Endothelial cell of umbilical vein (primary cell): ENCODE measurements at regions of chr11 and their contacts with region 1.

Region 1: DNA sequence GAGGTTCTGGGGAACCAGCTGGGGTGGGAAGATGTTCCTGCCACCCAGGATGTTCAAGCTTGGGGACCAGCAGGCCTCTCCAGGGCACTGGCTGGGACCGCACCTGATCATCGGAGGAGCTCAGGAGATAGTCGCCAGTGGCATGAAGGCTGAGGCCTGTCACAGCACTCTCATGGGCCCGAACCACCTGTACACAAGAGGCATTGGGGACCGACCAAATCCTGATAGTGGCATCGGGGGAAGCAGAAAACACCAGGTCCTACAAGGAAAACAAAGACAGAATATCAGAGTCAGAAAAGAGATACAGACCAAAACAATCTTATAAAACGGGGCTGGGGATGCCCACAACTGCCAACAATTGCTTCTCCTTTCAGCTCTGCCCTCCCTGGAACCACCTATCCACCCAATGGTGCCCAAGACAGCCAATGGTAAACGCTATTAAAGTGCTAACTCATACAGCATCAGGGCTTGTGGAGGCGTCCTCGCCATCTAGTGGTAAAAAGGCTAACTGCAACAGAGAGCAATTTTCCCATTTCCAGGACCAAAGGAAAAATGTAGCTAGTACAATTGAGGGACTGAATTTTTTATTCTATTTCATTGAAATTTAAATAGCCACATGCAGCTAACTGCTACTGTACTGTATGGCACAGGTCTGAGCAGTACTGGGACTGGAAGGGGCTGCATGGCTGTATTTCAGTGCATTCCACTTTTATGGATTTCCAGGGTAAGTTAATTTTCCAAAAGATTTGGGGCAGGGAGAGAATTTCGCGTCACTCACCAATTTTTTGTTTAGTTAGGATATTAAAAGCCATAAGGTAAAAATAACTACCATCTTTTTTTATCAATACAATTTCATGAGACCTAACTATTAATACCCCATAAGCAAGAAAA is 7.1 kb downstream of the PRPF19 start:
- DNase-seq: peak; percentile 81
- H3K4me3 ChIP-seq: no peak overlapping the region
- H3K27ac ChIP-seq: peak overlapping the region; percentile 1
- H3K4me1 ChIP-seq: peaks cover 2% of the 10 kb centered on the region
- H3K27me3 ChIP-seq: no peaks in the 10 kb centered on the region
- CTCF ChIP-seq: peak; percentile 85 to 94
- POLR2A ChIP-seq: no peak

Region 2: DNA sequence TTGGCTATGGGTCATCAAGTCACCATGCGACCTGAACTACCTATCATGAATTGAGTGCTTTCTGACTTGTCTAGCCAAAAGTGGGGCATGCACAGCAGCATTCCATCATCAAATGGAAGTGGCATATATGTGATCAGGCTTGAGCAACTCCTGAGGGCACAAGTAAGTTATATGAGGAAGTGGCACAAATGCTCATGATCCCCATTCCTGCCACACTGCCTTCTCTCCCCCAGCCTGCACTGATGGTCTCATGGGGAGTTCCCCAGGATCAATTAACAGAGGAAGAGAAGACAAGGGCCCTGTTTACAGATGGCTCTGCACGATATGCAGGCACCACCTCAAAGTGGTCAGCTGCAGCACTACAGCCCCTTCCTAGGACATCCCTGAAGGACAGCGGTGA is 678.1 kb before region 1 on chr11:
- CTCF ChIA-PET with region 1: no interaction called
- POLR2A ChIA-PET with region 1: no interaction called
- dilution Hi-C with region 1: no loop called
- intact Hi-C with region 1: no loop called
- DNase-seq: no peak
- H3K4me3 ChIP-seq: no peak overlapping the region
- H3K27ac ChIP-seq: no peak overlapping the region
- H3K4me1 ChIP-seq: no peaks in the 10 kb centered on the region
- H3K27me3 ChIP-seq: no peaks in the 10 kb centered on the region
- CTCF ChIP-seq: no peak
- POLR2A ChIP-seq: no peak

Region 3: GRCh38 chr11:60775420-60775961 is 123.8 kb before region 1 on chr11:
- CTCF ChIA-PET with region 1: interaction called, 122 read pairs
- POLR2A ChIA-PET with region 1: no interaction called
- dilution Hi-C with region 1: no loop called
- intact Hi-C with region 1: loop called (anchors 1 kb)
- DNase-seq: peak; percentile 95
- H3K4me3 ChIP-seq: no peak overlapping the region
- H3K27ac ChIP-seq: peak overlapping the region; percentile 70
- H3K4me1 ChIP-seq: peaks cover 29% of the 10 kb centered on the region
- H3K27me3 ChIP-seq: no peaks in the 10 kb centered on the region
- CTCF ChIP-seq: peak; percentile 84 to 95
- POLR2A ChIP-seq: no peak

Region 4: DNA sequence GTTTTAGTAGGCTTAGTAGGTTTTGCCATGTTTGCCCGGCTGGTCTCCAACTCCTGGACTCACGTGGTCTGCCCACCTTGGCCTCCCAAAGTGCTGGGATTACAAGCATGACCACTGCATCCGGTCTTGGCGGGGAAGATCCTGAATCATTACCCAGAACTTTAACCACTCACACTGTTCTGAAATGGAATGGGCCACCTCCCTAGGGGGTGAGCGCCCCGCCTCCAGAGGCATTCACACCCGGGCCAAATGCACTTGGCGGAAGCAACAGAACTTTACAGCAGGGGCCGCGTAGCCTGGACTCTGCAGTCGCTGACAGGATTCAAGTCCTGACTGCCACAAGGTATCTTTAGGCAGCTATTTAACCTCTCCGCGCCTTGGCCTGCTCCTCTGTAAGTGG is 52.0 kb before region 1 on chr11:
- CTCF ChIA-PET with region 1: interaction called, 15 read pairs
- POLR2A ChIA-PET with region 1: no interaction called
- dilution Hi-C with region 1: no loop called
- intact Hi-C with region 1: no loop called
- DNase-seq: no peak
- H3K4me3 ChIP-seq: no peak overlapping the region
- H3K27ac ChIP-seq: no peak overlapping the region
- H3K4me1 ChIP-seq: peaks cover 23% of the 10 kb centered on the region
- H3K27me3 ChIP-seq: no peaks in the 10 kb centered on the region
- CTCF ChIP-seq: no peak
- POLR2A ChIP-seq: no peak

Region 5: DNA sequence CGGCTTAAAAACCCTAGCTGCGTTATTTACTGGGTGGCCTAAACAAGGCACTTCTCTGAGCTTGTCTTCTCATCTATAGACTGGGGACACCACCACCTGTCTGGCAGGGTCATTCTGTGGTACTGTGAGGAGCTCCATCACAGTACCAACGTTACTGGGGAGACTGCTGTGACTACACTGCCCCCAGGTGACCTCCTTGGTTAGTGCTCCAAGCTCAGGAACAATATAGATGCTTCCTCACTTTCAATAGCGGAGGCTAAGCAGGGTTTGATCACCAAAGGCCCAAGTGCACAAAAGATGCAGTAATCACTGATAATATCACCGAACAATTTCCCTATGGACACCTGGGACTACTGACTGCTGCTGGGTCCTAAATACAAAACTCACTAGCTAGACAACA is 11.7 kb before region 1 on chr11:
- CTCF ChIA-PET with region 1: interaction called, 108 read pairs
- POLR2A ChIA-PET with region 1: no interaction called
- dilution Hi-C with region 1: no loop called
- intact Hi-C with region 1: no loop called
- DNase-seq: peak; percentile 56
- H3K4me3 ChIP-seq: no peak overlapping the region
- H3K27ac ChIP-seq: no peak overlapping the region
- H3K4me1 ChIP-seq: peaks cover 20% of the 10 kb centered on the region
- H3K27me3 ChIP-seq: no peaks in the 10 kb centered on the region
- CTCF ChIP-seq: peak; percentile 53 to 66
- POLR2A ChIP-seq: no peak

Region 6: GRCh38 chr11:60939855-60940254 is 40.6 kb after region 1 on chr11:
- CTCF ChIA-PET with region 1: interaction called, 10 read pairs
- POLR2A ChIA-PET with region 1: no interaction called
- dilution Hi-C with region 1: no loop called
- intact Hi-C with region 1: no loop called
- DNase-seq: no peak
- H3K4me3 ChIP-seq: no peak overlapping the region
- H3K27ac ChIP-seq: no peak overlapping the region
- H3K4me1 ChIP-seq: peaks cover 8% of the 10 kb centered on the region
- H3K27me3 ChIP-seq: no peaks in the 10 kb centered on the region
- CTCF ChIP-seq: no peak
- POLR2A ChIP-seq: no peak